Astrocyte of the cerebellum (primary cell): ENCODE measurements at regions of chr1 and their contacts with region 1.

Region 1: GRCh38 chr1:55584526-55585401 is 369.6 kb upstream of the USP24 start:
- DNase-seq: peak; percentile 63
- H3K4me3 ChIP-seq: no peak overlapping the region
- CTCF ChIP-seq: peak; percentile 26

Region 2: GRCh38 chr1:55554611-55555010 is 30.2 kb before region 1 on chr1:
- in situ Hi-C with region 1: loop called (anchors 5 kb)
- DNase-seq: no peak
- H3K4me3 ChIP-seq: no peak overlapping the region
- CTCF ChIP-seq: no peak